ENCODE measurements at regions of chr4 and their contacts with region 1.

Region 1: GRCh38 chr4:114386637-114387233 is 211.9 kb upstream of the UGT8 start:
- DNase-seq: no peak
- ATAC-seq: no peak

Region 2: GRCh38 chr4:113952452-113953029 is 434.2 kb before region 1 on chr4:
- intact Hi-C with region 1: loop called in 1 of 2 experiments (anchors 5 kb)
- DNase-seq: no peak
- ATAC-seq: peak; percentile 27 to 85

Region 3: DNA sequence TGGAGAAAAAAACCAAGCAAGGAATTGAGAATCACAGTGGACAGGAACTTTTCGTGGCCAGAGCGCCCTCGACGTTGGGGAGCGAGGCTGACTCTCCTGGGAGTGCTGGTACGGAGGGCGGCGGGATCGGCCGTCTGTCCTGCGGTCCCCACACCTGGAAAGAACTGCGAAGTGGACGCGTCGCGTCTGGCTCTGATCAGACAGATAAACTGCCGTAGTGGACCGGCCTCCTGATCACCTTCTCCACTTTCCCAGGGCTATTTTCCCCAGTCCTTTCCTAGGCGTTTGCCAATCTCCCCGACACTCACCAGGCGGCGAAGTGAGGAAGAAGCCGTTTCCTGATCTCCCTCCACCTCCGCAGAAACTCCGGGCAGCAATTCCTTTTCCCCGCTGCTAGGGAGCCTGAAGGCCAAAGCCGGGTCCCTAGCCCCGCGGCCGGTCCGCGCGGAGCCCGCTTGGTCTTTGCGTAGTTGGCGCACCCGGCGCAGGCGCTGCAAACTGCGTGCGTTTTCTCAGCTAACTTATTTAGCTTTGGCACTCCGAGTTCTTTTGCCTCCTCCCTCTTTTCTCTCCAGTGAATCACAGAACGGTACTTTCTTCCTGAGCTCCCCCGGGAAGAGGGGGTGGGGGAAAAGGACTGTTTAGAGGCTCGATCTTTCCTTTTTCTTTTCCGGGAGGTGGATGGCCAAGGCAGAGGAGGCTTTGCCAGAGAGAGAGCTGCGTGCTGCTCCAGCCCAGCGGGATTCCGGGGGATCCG is 407.4 kb before region 1 on chr4 and contains the start of gene ARSJ:
- intact Hi-C with region 1: no loop called
- DNase-seq: peak; percentile 66
- ATAC-seq: peak; percentile 79 to 91
- total RNA-seq, gene ARSJ: 3.4 to 5.3 TPM

Region 4: DNA sequence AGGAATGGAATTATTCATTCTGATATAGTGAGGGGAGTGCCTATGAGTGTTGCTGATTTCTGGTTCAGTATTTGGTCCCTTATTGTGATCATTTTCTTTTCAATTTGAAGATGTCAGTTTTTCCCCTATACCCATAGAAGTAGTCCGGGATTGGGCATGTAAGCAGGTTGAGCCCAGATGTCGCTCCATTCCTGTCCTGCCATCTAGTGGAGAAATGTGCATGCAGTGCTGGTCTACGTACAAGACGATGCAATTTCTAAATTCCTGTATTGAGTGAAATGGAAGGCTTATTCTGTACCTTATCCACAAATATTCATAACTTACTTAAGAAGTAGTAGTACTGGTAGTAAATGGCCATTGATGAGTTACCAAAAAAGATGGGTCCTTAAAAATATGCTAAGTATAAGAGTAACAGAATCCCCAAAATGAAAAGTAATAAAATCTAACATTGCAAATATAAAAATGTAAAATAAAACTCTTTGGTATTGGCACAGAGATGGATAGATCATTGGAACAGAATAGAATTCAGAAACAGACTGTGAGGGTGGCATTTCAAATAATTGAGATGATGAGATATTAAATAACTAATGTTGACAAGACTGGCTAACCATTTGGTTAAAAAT is 272.8 kb after region 1 on chr4:
- intact Hi-C with region 1: loop called (anchors 5 to 10 kb)
- DNase-seq: peak; percentile 26
- ATAC-seq: peak; percentile 81 to 86

Region 5: DNA sequence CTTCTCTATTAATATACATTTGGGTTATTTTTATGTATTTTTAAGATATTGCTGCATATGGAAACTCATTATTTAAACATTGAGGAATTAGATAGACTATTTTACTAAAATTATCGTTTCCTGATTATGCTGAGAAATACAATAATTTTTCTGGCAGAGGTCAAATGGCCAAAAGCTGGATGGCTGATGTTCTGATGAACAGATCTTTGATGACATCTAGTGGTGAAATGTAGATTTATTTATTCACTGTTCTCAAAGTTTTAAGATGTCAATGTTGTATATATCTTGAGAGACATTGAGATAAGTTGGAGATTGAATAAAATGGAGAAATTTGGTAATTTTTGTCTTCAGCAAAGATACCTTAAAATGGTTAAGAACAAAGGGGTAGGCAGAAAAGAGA is 308.0 kb after region 1 on chr4:
- intact Hi-C with region 1: loop called (anchors 2 to 10 kb)
- DNase-seq: no peak
- ATAC-seq: no peak

Region 6: DNA sequence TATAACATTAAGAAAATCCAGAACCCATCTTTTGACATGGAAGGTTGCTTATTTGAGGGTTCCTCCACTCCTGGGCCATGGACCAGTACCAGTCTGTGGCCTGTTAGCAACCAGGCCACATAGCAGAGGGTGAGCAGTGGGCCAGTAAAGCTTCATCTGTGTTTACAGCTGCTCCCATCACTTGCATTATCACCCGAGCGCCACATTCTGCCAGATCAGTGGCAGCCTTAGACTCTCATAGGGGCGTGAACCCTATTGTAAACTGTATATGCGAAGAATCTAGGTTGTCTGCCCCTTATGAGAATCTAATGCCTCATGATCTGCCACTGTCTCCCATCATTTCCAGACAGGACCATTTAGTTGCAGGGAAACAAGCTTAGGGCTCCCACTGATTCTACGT is 668.1 kb after region 1 on chr4:
- intact Hi-C with region 1: no loop called
- DNase-seq: no peak
- ATAC-seq: no peak